MCF 10A (cell line): ENCODE measurements at regions of chr12 and their contacts with region 1.

Region 1: GRCh38 chr12:62603061-62603810 is 136.6 kb downstream of the MON2 start:
- DNase-seq: peak; percentile 87
- H3K4me3 Mint-ChIP-seq: peak overlapping the region; percentile 94
- H3K27ac Mint-ChIP-seq: peak overlapping the region; percentile 100
- H3K4me1 Mint-ChIP-seq: peaks cover 29% of the 10 kb centered on the region
- H3K27me3 Mint-ChIP-seq: no peaks in the 10 kb centered on the region
- CTCF ChIP-seq: peak; percentile 20

Region 2: DNA sequence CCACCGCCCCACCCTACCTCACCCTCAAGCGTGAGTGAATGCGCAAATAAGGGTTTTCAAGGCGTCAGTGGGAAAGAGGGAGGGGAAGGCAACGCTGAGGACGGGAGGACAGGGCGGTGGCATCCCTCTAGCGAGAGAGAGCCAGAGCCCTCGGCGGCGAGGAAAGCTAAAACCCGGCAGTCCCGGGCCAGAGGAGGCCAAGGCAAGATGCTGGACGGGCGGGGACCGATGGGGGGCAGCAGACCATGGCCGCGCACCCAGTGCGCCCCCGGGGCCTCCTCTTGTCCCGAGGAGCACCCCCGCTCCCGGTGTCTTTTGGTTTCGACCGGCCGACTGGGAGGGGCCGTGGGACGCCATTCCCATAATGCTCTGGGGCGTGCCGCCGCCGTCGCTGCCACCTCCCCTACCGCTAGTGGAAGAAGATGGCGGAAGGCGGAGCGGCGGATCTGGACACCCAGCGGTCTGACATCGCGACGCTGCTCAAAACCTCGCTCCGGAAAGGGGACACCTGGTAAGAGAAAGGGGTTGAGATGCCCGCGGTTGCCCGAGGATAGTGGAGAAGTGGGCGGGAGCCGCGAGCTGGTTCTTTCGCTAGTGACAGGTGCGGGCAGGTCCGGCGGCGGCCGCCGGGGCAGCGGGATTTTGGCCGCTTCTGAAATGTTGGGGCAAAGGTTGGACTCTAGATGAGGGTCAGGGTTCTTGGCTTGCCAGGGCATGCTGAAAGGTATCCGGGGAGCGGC is 343.1 kb before region 1 on chr12 and contains the start of gene USP15:
- CTCF ChIA-PET with region 1: no interaction called
- POLR2A ChIA-PET with region 1: no interaction called
- intact Hi-C with region 1: loop called (anchors 10 kb)
- DNase-seq: peak; percentile 95
- H3K4me3 Mint-ChIP-seq: peak within 1 kb of the TSS; percentile 78
- H3K27ac Mint-ChIP-seq: peak within 1 kb of the TSS; percentile 97
- H3K4me1 Mint-ChIP-seq: peaks cover 34% of the 10 kb centered on the region
- H3K27me3 Mint-ChIP-seq: no peaks in the 10 kb centered on the region
- CTCF ChIP-seq: peak; percentile 57
- total RNA-seq, gene USP15: 63.6 and 71.0 TPM in 2 replicates

Region 3: GRCh38 chr12:62466594-62467491 is 136.4 kb before region 1 on chr12 and contains the start of gene MON2:
- CTCF ChIA-PET with region 1: no interaction called
- POLR2A ChIA-PET with region 1: interaction called, 14 read pairs
- intact Hi-C with region 1: no loop called
- DNase-seq: peak; percentile 85
- H3K4me3 Mint-ChIP-seq: peak within 1 kb of the TSS; percentile 81
- H3K27ac Mint-ChIP-seq: peak within 1 kb of the TSS; percentile 93
- H3K4me1 Mint-ChIP-seq: peaks cover 10% of the 10 kb centered on the region
- H3K27me3 Mint-ChIP-seq: no peaks in the 10 kb centered on the region
- CTCF ChIP-seq: no peak
- total RNA-seq, gene MON2: 49.5 and 57.4 TPM in 2 replicates

Region 4: DNA sequence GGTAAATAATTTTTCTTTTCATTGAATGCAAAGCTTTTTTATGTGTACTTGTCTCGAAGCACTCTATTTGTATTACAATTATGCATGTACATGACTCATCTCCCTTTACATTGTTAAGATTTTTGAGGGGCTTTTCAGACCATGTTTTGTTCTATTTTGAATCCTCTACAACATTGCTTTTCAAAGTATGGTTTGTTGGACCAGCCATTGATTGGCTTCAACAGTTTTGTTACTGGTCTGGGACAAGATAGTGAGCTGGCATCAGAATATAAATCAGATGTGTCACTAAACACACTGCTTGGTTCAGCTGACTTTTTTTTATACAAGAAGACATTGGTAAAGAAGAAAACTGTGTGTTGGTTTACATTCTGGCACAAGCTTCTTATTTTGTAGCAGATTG is 14.3 kb before region 1 on chr12:
- CTCF ChIA-PET with region 1: interaction called, 4 read pairs
- POLR2A ChIA-PET with region 1: interaction called, 12 read pairs
- intact Hi-C with region 1: no loop called
- DNase-seq: no peak
- H3K4me3 Mint-ChIP-seq: no peak overlapping the region
- H3K27ac Mint-ChIP-seq: no peak overlapping the region
- H3K4me1 Mint-ChIP-seq: no peaks in the 10 kb centered on the region
- H3K27me3 Mint-ChIP-seq: no peaks in the 10 kb centered on the region
- CTCF ChIP-seq: no peak

Region 5: GRCh38 chr12:62631471-62632410 is 28.5 kb after region 1 on chr12:
- CTCF ChIA-PET with region 1: no interaction called
- POLR2A ChIA-PET with region 1: no interaction called
- intact Hi-C with region 1: no loop called
- DNase-seq: no peak
- H3K4me3 Mint-ChIP-seq: peak overlapping the region; percentile 57
- H3K27ac Mint-ChIP-seq: no peak overlapping the region
- H3K4me1 Mint-ChIP-seq: peaks cover 6% of the 10 kb centered on the region
- H3K27me3 Mint-ChIP-seq: no peaks in the 10 kb centered on the region
- CTCF ChIP-seq: no peak

Region 6: GRCh38 chr12:62731055-62731820 is 128.0 kb after region 1 on chr12:
- CTCF ChIA-PET with region 1: no interaction called
- POLR2A ChIA-PET with region 1: interaction called, 3 read pairs
- intact Hi-C with region 1: loop called (anchors 5 kb)
- DNase-seq: peak; percentile 22
- H3K4me3 Mint-ChIP-seq: no peak overlapping the region
- H3K27ac Mint-ChIP-seq: no peak overlapping the region
- H3K4me1 Mint-ChIP-seq: peaks cover 23% of the 10 kb centered on the region
- H3K27me3 Mint-ChIP-seq: no peaks in the 10 kb centered on the region
- CTCF ChIP-seq: no peak

Region 7: GRCh38 chr12:62793256-62794217 is 190.3 kb after region 1 on chr12:
- CTCF ChIA-PET with region 1: interaction called, 33 read pairs
- POLR2A ChIA-PET with region 1: interaction called, 27 read pairs
- intact Hi-C with region 1: loop called (anchors 1 kb)
- DNase-seq: peak; percentile 88
- H3K4me3 Mint-ChIP-seq: no peak overlapping the region
- H3K27ac Mint-ChIP-seq: no peak overlapping the region
- H3K4me1 Mint-ChIP-seq: no peaks in the 10 kb centered on the region
- H3K27me3 Mint-ChIP-seq: no peaks in the 10 kb centered on the region
- CTCF ChIP-seq: peak; percentile 91

Region 8: DNA sequence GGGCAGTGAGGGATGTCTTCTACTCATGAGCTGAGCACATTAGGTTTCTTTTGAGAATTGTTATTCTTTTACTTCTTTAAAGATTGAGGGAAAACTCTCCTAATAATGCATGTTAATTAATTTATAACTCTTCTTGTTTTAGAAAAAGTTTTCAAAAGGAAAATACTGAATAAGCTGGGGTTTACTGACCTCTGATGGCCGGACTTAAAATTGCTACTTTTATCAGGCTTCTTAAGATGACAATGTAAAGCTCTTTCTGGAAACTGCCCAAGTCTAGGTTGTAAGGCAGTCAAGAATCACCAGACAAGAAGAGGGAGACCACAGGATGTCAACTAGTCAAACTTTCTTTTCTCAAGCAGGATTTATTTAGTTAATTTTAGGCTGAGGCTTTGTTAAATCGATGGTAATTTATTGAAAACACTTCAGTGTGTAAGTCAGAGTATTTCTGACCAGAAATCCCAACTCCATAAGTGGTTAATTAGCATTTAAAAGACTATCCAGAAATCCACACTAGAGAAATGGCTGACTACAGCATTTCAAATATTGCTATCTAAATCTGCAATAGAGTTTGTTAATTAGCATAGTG is 465.7 kb after region 1 on chr12:
- CTCF ChIA-PET with region 1: interaction called, 6 read pairs
- POLR2A ChIA-PET with region 1: interaction called, 5 read pairs
- intact Hi-C with region 1: loop called (anchors 10 kb)
- DNase-seq: peak; percentile 72
- H3K4me3 Mint-ChIP-seq: no peak overlapping the region
- H3K27ac Mint-ChIP-seq: no peak overlapping the region
- H3K4me1 Mint-ChIP-seq: no peaks in the 10 kb centered on the region
- H3K27me3 Mint-ChIP-seq: no peaks in the 10 kb centered on the region
- CTCF ChIP-seq: peak; percentile 55